Endothelial cell of umbilical vein (primary cell): ENCODE measurements at regions of chr3 and their contacts with region 1.

Region 1: DNA sequence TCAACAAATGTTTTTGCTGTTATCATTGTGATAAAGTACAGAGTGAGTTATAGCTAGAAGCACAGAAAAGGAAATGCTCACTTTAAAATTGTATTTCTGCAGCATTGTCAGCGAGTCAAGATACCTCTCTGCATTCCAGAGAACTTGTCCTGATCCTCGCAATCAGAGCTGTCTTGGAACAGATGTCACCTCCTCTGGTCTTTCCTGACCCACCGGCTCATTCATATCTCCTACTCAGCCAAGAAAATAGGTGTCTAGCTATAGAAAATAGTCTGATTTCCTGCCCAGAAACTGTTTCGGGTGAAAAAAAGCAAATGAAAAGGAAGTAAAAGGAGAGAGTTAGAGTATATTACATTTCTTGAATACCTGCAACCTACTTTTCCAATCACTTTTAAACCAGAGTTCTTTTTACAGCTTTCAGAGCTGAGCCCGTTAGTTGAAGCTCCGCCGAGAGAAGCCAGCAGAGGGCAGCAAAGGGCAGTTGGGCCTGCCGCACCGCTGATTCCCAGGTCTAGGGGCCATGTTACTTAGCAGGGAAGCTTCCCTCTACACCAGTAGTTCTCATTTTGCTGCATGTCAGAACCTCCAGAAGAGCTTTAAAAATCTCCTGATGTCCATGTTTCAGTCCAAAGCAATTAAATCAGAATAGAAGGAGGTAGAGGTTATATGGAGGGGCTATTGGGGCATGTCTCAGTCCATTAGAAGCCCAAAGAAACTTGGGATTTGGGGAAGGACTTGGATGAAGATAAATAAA is 185.7 kb upstream of the THRB start:
- DNase-seq: peak; percentile 57
- H3K4me3 ChIP-seq: no peak overlapping the region
- H3K27ac ChIP-seq: no peak overlapping the region
- H3K4me1 ChIP-seq: no peaks in the 10 kb centered on the region
- H3K27me3 ChIP-seq: peaks cover 0 to 2% of the 10 kb centered on the region in 2 experiments
- CTCF ChIP-seq: peak; percentile 88 to 92
- POLR2A ChIP-seq: no peak

Region 2: GRCh38 chr3:23999012-23999641 is 681.3 kb before region 1 on chr3:
- CTCF ChIA-PET with region 1: interaction called, 9 read pairs
- POLR2A ChIA-PET with region 1: no interaction called
- dilution Hi-C with region 1: no loop called
- intact Hi-C with region 1: loop called (anchors 1 kb)
- DNase-seq: peak; percentile 79
- H3K4me3 ChIP-seq: no peak overlapping the region
- H3K27ac ChIP-seq: no peak overlapping the region
- H3K4me1 ChIP-seq: peaks cover 3% of the 10 kb centered on the region
- H3K27me3 ChIP-seq: peaks cover 4 to 8% of the 10 kb centered on the region in 2 experiments
- CTCF ChIP-seq: peak; percentile 67 to 87
- POLR2A ChIP-seq: no peak

Region 3: GRCh38 chr3:24180644-24181043 is 499.7 kb before region 1 on chr3:
- CTCF ChIA-PET with region 1: interaction called, 99 read pairs
- POLR2A ChIA-PET with region 1: no interaction called
- dilution Hi-C with region 1: no loop called
- intact Hi-C with region 1: no loop called
- DNase-seq: no peak
- H3K4me3 ChIP-seq: no peak overlapping the region
- H3K27ac ChIP-seq: no peak overlapping the region
- H3K4me1 ChIP-seq: no peaks in the 10 kb centered on the region
- H3K27me3 ChIP-seq: no peaks in the 10 kb centered on the region
- CTCF ChIP-seq: no peak
- POLR2A ChIP-seq: no peak

Region 4: GRCh38 chr3:24264748-24265158 is 415.6 kb before region 1 on chr3:
- CTCF ChIA-PET with region 1: interaction called, 32 read pairs
- POLR2A ChIA-PET with region 1: no interaction called
- dilution Hi-C with region 1: no loop called
- intact Hi-C with region 1: loop called (anchors 1 kb)
- DNase-seq: peak; percentile 58
- H3K4me3 ChIP-seq: no peak overlapping the region
- H3K27ac ChIP-seq: no peak overlapping the region
- H3K4me1 ChIP-seq: no peaks in the 10 kb centered on the region
- H3K27me3 ChIP-seq: no peaks in the 10 kb centered on the region
- CTCF ChIP-seq: peak; percentile 57 to 62
- POLR2A ChIP-seq: no peak

Region 5: DNA sequence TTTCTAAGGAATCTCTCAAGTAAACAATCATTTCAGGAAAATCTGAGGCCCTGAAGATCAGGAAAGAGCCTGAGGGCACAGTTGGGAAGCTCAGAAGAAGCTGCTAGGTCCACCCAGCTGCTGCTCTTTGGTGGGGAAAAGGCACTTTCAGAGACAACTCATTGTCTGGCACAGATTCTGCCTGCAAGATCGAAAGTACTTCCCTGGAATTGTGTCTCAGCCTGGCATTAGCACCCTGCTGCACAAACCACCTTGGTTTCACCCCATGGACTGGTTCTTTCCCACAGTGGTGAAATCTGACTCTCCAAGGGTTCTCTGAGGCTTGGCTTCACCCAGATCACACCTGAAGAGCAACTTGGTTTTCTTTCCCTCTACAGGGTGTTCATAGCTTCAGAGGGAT is 204.5 kb before region 1 on chr3:
- CTCF ChIA-PET with region 1: no interaction called
- POLR2A ChIA-PET with region 1: no interaction called
- dilution Hi-C with region 1: no loop called
- intact Hi-C with region 1: no loop called
- DNase-seq: no peak
- H3K4me3 ChIP-seq: no peak overlapping the region
- H3K27ac ChIP-seq: no peak overlapping the region
- H3K4me1 ChIP-seq: no peaks in the 10 kb centered on the region
- H3K27me3 ChIP-seq: peaks cover 4 to 5% of the 10 kb centered on the region in 2 experiments
- CTCF ChIP-seq: no peak
- POLR2A ChIP-seq: no peak

Region 6: DNA sequence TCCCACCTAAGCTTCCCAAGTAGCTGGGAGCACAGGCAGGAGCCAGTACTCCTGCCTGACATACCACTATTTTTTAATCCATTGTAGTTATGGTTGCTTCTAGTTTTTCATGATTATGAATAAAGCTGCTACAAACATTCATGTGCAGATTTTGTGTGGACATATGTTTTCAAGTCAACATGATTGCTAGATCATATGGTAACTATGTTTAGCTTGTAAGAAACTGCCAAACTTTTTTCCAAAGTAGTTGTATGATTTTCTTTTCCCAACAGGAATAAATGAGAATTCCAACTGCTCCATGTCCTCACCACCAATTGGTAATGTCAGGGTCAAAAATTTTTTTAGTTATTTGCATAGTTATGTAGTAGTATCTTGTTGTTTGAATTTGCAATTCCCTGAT is 48.9 kb before region 1 on chr3:
- CTCF ChIA-PET with region 1: no interaction called
- POLR2A ChIA-PET with region 1: no interaction called
- dilution Hi-C with region 1: no loop called
- intact Hi-C with region 1: no loop called
- DNase-seq: no peak
- H3K4me3 ChIP-seq: no peak overlapping the region
- H3K27ac ChIP-seq: no peak overlapping the region
- H3K4me1 ChIP-seq: no peaks in the 10 kb centered on the region
- H3K27me3 ChIP-seq: peaks cover 0 to 1% of the 10 kb centered on the region in 2 experiments
- CTCF ChIP-seq: no peak
- POLR2A ChIP-seq: no peak

Region 7: DNA sequence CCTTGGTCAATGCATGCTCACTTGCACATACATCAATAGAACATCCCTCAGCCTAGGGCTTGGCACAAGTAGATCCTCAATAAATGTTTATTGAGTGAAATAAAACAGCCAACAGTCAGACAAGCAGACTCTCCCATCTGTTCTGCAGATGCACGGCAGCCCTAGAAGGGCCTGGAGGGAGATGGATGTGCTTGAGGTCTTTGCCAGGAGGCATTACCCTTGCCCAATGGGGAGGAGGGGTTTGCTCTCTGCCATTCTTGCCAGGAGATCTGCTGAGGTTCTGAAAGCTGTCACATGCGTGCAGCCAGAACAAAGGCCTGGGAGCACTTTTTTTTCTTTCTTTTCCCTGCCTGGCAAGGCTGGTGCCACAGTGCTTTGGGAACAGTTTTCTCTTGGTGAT is 163.6 kb after region 1 on chr3:
- CTCF ChIA-PET with region 1: no interaction called
- POLR2A ChIA-PET with region 1: no interaction called
- dilution Hi-C with region 1: no loop called
- intact Hi-C with region 1: no loop called
- DNase-seq: no peak
- H3K4me3 ChIP-seq: no peak overlapping the region
- H3K27ac ChIP-seq: no peak overlapping the region
- H3K4me1 ChIP-seq: no peaks in the 10 kb centered on the region
- H3K27me3 ChIP-seq: no peaks in the 10 kb centered on the region
- CTCF ChIP-seq: no peak
- POLR2A ChIP-seq: no peak